Activated CD4-positive, alpha-beta T cell treated with anti-CD3 and anti-CD28 coated beads, Interleukin-2, amount 10 ng/mL, durations not matched to agents 7 days and 5 days (primary cell): ENCODE measurements at regions of chr7 and their contacts with region 1.

Region 1: GRCh38 chr7:21338728-21339164 is 89.1 kb upstream of the SP4 start:
- DNase-seq: peak; percentile 67
- H3K4me3 Mint-ChIP-seq: peak overlapping the region; percentile 23
- H3K27ac Mint-ChIP-seq: peak overlapping the region; percentile 96
- H3K4me1 Mint-ChIP-seq: peaks cover 70% of the 10 kb centered on the region
- H3K27me3 Mint-ChIP-seq: no peaks in the 10 kb centered on the region

Region 2: GRCh38 chr7:21327422-21328409 is 11.0 kb before region 1 on chr7:
- CTCF ChIA-PET with region 1: interaction called, 14 read pairs
- POLR2A ChIA-PET with region 1: interaction called, 4 read pairs
- DNase-seq: no peak
- H3K4me3 Mint-ChIP-seq: no peak overlapping the region
- H3K27ac Mint-ChIP-seq: no peak overlapping the region
- H3K4me1 Mint-ChIP-seq: peaks cover 10% of the 10 kb centered on the region
- H3K27me3 Mint-ChIP-seq: peaks cover 2% of the 10 kb centered on the region